ENCODE measurements at regions of chr1 and their contacts with region 1.

Region 1: GRCh38 chr1:104082221-104082620 is 332.5 kb downstream of the AMY1C start:
- DNase-seq: no peak
- H3K4me3 ChIP-seq: no peak overlapping the region
- H3K27ac ChIP-seq: no peak overlapping the region
- H3K4me1 ChIP-seq: no peaks in the 10 kb centered on the region
- H3K27me3 ChIP-seq: no peaks in the 10 kb centered on the region
- CTCF ChIP-seq: no peak

Region 2: GRCh38 chr1:103307751-103308150 is 774.5 kb before region 1 on chr1:
- intact Hi-C with region 1: no loop called
- DNase-seq: no peak
- H3K4me3 ChIP-seq: no peak overlapping the region
- H3K27ac ChIP-seq: no peak overlapping the region
- H3K4me1 ChIP-seq: no peaks in the 10 kb centered on the region
- H3K27me3 ChIP-seq: no peaks in the 10 kb centered on the region
- CTCF ChIP-seq: no peak

Region 3: DNA sequence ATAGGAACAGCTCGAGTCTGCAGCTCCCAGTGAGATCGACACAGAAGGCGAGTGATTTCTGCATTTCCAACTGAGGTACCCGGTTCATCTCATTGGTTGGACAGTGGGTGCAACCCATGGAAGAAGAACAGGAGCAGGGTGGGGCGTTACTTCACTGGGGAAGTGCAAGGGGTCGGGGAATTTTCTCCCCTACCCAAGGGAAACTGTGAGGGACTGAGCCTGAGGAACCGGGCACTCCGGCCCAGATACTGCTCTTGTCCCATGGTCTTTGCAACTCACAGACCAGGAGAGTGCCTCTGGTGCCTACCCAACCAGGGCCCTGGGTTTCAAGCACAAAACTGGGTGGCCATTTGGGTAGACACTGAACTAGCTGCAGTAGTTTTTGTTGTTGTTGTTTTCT is 25.4 kb before region 1 on chr1:
- intact Hi-C with region 1: no loop called
- DNase-seq: no peak
- H3K4me3 ChIP-seq: no peak overlapping the region
- H3K27ac ChIP-seq: no peak overlapping the region
- H3K4me1 ChIP-seq: no peaks in the 10 kb centered on the region
- H3K27me3 ChIP-seq: no peaks in the 10 kb centered on the region
- CTCF ChIP-seq: no peak

Region 4: GRCh38 chr1:104092698-104093097 is 10.5 kb after region 1 on chr1:
- intact Hi-C with region 1: loop called (anchors 2 kb)
- DNase-seq: no peak
- H3K4me3 ChIP-seq: no peak overlapping the region
- H3K27ac ChIP-seq: no peak overlapping the region
- H3K4me1 ChIP-seq: no peaks in the 10 kb centered on the region
- H3K27me3 ChIP-seq: no peaks in the 10 kb centered on the region
- CTCF ChIP-seq: no peak

Region 5: GRCh38 chr1:104132382-104132973 is 50.3 kb after region 1 on chr1:
- intact Hi-C with region 1: no loop called
- DNase-seq: no peak
- H3K4me3 ChIP-seq: no peak overlapping the region
- H3K27ac ChIP-seq: no peak overlapping the region
- H3K4me1 ChIP-seq: no peaks in the 10 kb centered on the region
- H3K27me3 ChIP-seq: no peaks in the 10 kb centered on the region
- CTCF ChIP-seq: no peak